ENCODE measurements at regions of chr13 and their contacts with region 1.

Region 1: DNA sequence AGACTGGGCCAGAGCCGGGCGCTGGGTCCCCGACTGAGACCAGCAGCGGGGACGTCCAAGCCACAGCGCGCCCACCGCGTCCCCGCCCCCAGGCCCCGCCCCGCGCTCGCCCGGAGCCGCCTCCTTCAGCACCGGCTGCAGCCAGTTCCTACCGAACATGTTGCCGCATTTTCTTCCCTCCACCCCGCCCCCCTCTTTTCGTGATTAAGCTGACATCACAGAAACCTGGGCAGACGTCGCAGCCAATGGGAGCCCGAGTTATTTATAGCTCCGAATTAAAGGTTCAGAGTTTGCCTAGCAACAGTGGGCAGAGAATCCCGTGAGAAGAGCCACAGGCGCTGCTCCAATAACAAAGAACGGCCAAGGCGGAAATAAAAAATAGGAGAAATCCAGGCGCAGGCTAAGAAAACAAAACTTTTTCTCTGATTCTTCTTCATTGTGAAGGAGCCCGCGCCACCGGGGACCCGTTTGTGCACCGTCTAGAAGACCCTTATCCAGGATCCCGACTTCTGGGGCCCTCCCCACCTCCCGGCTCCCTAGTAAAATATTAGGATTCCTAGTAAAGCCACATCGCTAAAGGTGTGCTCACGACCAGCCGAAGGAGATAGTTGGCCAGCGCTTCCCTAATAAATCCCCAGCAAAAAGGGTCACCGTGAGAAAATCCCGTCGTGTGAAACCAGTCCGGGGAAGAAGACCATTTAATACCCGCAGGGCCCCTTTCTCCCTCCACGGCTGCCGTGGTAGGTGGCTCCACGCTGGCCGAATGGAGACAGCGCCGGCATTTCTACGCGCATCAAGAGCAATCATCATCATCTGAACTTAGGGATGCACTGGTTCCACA is 61.7 kb downstream of the SERP2 start:
- DNase-seq: peak; percentile 94 to 96
- ATAC-seq: peak; percentile 75 to 78
- H3K4me3 ChIP-seq: peak overlapping the region; percentile 79 to 85 (median 82)
- H3K27ac ChIP-seq: peak overlapping the region; percentile 87 to 95 (median 92)
- H3K4me1 ChIP-seq: peaks cover 28 to 47% of the 10 kb centered on the region in 2 donors
- H3K27me3 ChIP-seq: no peaks in the 10 kb centered on the region
- CTCF ChIP-seq: no peak
- POLR2A ChIP-seq: peak; percentile 76 to 93

Region 2: GRCh38 chr13:42865768-42866102 is 1569.6 kb before region 1 on chr13:
- in situ Hi-C with region 1: no loop called
- intact Hi-C with region 1: no loop called
- DNase-seq: no peak
- ATAC-seq: no peak
- H3K4me3 ChIP-seq: no peak overlapping the region
- H3K27ac ChIP-seq: no peak overlapping the region
- H3K4me1 ChIP-seq: no peaks in the 10 kb centered on the region
- H3K27me3 ChIP-seq: no peaks in the 10 kb centered on the region
- CTCF ChIP-seq: no peak
- POLR2A ChIP-seq: no peak

Region 3: DNA sequence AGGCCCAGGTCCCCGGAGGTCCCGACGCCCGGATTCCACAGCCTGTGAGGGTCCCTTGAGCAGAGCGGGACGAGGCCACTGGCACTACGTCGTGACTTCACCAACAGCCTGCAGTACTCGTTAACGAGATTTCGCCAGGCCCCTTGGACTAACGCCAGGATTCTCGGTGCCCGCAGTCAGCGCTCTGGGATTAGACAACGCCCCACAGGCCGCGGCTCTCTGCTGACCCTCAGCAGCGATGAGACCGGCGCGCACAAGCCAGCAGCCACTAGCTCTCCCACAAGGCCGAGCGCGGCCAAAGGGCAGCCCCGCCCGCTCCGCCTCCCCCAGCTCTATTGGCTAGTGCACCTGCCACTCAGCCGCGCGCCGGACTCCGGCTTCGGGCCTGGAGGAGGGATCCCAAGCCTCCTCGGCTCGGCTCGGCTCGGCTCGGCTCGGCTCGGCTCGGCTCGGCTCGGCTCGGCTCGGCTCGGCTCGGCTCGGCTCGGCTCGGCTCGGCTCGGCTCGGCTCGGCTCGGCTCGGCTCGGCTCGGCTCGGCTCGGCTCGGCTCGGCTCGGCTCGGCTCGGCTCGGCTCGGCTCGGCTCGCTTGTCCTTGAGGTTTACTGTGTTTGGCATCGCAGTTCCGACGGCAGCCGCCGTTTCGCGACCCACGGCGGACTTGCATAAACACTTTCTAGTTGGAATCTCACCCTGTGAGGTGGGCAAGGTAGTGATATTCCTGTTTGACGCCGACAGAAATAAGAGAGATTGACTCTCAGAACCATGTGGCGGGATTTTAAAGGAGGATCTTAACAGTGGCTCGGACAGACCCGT is 293.4 kb before region 1 on chr13:
- in situ Hi-C with region 1: no loop called
- intact Hi-C with region 1: loop called (anchors 1 kb)
- DNase-seq: peak; percentile 96 to 98
- ATAC-seq: peak; percentile 87 to 89
- H3K4me3 ChIP-seq: peak overlapping the region; percentile 54 to 72 (median 68)
- H3K27ac ChIP-seq: peak overlapping the region; percentile 92 to 98 (median 96)
- H3K4me1 ChIP-seq: peaks cover 9 to 21% of the 10 kb centered on the region in 2 donors
- H3K27me3 ChIP-seq: no peaks in the 10 kb centered on the region
- CTCF ChIP-seq: peak; percentile 23 to 31 (median 26)
- POLR2A ChIP-seq: peak; percentile 84 to 94

Region 4: GRCh38 chr13:44237276-44237767 is 198.0 kb before region 1 on chr13:
- in situ Hi-C with region 1: no loop called
- intact Hi-C with region 1: loop called (anchors 2 kb)
- DNase-seq: peak; percentile 86 to 89
- ATAC-seq: peak; percentile 87 to 90
- H3K4me3 ChIP-seq: no peak overlapping the region
- H3K27ac ChIP-seq: peak overlapping the region; percentile 91 to 94 (median 93)
- H3K4me1 ChIP-seq: peaks cover 47 to 51% of the 10 kb centered on the region in 2 donors
- H3K27me3 ChIP-seq: no peaks in the 10 kb centered on the region
- CTCF ChIP-seq: no peak
- POLR2A ChIP-seq: peak; percentile 39 to 60

Region 5: GRCh38 chr13:44312898-44313551 is 122.3 kb before region 1 on chr13:
- in situ Hi-C with region 1: loop called in 1 of 4 experiments (anchors 10 kb)
- intact Hi-C with region 1: no loop called
- DNase-seq: no peak
- ATAC-seq: no peak
- H3K4me3 ChIP-seq: no peak overlapping the region
- H3K27ac ChIP-seq: no peak overlapping the region
- H3K4me1 ChIP-seq: peaks cover 24 to 27% of the 10 kb centered on the region in 2 donors
- H3K27me3 ChIP-seq: no peaks in the 10 kb centered on the region
- CTCF ChIP-seq: no peak
- POLR2A ChIP-seq: no peak

Measured in gastrocnemius medialis (tissue), 4 donors.